Activated CD8-positive, alpha-beta memory T cell treated with anti-CD3 and anti-CD28 coated beads, Interleukin-2, amount 10 ng/mL, durations not matched to agents 7 days and 5 days (primary cell): ENCODE measurements at regions of chr16 and their contacts with region 1.

Region 1: DNA sequence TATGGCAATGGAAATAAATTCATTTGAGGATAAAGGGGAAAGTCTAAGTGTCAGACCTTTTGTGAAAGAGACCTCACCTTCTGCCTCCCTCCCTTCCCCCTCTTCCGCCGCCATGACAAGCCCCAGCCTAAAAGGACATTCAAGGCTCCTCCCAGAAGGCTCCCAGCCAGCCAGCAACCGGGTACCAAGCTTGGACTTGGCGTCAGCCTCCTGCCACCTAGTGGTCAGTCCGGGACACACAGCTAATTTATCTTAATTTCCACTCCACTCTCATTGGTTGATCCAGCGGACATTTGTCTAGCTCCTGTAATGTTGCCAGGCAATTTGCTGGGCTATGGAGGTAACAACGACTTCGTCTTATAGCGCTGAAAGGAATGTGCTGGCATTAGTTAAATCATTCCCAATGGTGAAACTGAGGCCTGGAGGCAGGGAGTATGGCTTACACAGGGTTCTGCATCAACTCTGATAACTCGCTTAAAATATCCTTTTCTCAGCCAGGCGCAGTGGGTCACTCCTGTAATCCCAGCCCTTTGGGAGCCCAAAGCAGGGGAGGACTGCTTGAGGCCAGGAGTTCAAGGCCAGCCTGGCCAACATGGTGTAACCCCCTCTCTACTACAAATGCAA is 19.3 kb upstream of the CLEC3A start:
- DNase-seq: peak; percentile 85
- ATAC-seq: peak; percentile 92
- H3K4me3 Mint-ChIP-seq: no peak overlapping the region
- H3K27ac Mint-ChIP-seq: no peak overlapping the region
- H3K4me1 Mint-ChIP-seq: peaks cover 5% of the 10 kb centered on the region
- H3K27me3 Mint-ChIP-seq: peaks cover 5% of the 10 kb centered on the region

Region 2: GRCh38 chr16:77675464-77676324 is 327.3 kb before region 1 on chr16:
- CTCF ChIA-PET with region 1: interaction called, 12 read pairs
- DNase-seq: peak; percentile 72
- ATAC-seq: peak; percentile 53
- H3K4me3 Mint-ChIP-seq: no peak overlapping the region
- H3K27ac Mint-ChIP-seq: no peak overlapping the region
- H3K4me1 Mint-ChIP-seq: no peaks in the 10 kb centered on the region
- H3K27me3 Mint-ChIP-seq: peaks cover 10% of the 10 kb centered on the region

Region 3: GRCh38 chr16:78072275-78072702 is 69.3 kb after region 1 on chr16:
- CTCF ChIA-PET with region 1: no interaction called
- DNase-seq: no peak
- ATAC-seq: no peak
- H3K4me3 Mint-ChIP-seq: no peak overlapping the region
- H3K27ac Mint-ChIP-seq: no peak overlapping the region
- H3K4me1 Mint-ChIP-seq: no peaks in the 10 kb centered on the region
- H3K27me3 Mint-ChIP-seq: peaks cover 19% of the 10 kb centered on the region